Posterior cingulate gyrus (tissue), 11 donors: ENCODE measurements at regions of chr16 and their contacts with region 1.

Region 1: GRCh38 chr16:2911580-2912329 is at the start of gene FLYWCH1:
- DNase-seq: peak; percentile 96 to 100 (median 98)

Region 2: GRCh38 chr16:2980227-2981086 is 68.7 kb after region 1 on chr16 and contains the start of gene PKMYT1:
- intact Hi-C with region 1: loop called (anchors 5 kb)
- DNase-seq: peak; percentile 83 to 99 (median 90)